Sciatic nerve (tissue), 2 donors: ENCODE measurements at regions of chr6 and their contacts with region 1.

Region 1: GRCh38 chr6:152026291-152026690 is 218.8 kb downstream of the ESR1 start:
- DNase-seq: no peak
- ATAC-seq: no peak

Region 2: GRCh38 chr6:151962246-151962846 is 63.9 kb before region 1 on chr6:
- intact Hi-C with region 1: no loop called
- DNase-seq: no peak
- ATAC-seq: no peak

Region 3: DNA sequence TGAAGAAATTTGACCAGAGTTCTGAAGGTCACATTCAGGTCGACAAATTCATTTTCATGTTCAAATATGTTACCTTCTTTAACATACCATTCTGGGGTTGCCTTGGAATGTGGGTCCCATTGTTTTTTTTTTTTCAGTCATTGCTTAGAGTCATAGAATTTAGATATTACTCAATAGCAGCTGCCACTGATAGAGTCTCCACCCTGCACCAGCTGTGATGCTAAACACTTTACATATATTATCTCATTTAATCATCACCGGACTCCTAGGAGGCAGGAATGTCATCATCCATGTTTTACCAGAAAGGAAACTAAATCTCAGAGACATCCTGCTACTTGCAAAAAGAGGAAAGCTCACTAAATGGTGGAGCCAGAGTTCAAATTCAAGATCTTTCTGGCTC is 14.1 kb before region 1 on chr6:
- intact Hi-C with region 1: loop called (anchors 1 kb)
- DNase-seq: no peak
- ATAC-seq: no peak

Region 4: DNA sequence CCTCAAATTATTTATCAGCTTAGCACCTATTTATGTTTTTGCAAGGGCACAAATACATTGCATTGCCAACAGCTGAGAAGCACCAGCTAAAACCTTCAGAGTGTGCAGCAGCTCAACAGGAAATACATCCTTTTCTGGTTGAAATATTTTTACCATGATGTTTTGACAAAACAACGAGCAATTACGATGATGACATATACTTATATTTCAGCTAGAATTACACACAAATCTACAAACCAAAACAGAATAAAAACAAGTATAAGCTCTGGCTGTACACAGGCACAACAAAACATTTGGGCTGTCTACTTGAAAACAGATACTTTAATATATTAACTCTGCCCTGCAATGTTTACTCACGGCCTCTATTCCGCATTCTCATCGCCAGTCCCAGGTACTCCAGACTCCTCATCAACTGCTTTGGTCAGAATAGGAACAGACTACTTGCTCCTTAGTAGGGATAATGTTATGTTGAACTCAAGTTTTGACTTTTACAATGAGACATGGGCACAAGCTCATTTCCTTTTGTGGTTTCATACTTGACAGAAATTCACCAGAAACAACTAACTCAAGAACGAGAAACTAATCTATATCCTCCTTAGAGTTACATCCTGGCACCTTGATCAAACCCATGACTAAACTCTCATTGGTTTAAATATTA is 158.8 kb after region 1 on chr6:
- intact Hi-C with region 1: no loop called
- DNase-seq: no peak
- ATAC-seq: no peak

Region 5: DNA sequence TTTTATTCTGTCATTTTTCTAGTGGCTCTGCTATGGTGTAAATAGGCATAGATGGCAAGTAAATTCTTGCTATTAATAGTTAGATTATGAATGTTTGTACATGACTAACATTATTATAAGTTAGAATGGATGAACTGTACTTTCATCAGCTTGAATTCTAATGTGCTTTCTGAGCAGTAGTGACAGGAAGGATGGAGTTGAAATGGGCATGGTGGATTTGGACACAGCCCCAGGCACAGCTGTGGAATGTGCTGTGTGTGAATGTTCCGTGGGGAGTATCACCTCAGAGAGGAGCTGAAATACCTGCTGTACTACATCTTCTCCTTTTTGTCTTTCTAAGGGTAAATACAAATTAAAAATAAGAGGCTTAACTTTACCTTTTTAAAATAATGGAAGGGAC is 889.7 kb after region 1 on chr6:
- intact Hi-C with region 1: no loop called
- DNase-seq: no peak
- ATAC-seq: no peak